Heart right ventricle (tissue), 16 donors: ENCODE measurements at regions of chr10 and their contacts with region 1.

Region 1: GRCh38 chr10:35635576-35635975 is 6.5 kb downstream of the FZD8 start:
- DNase-seq: peak in 1 of 2 donors; percentile 48
- ATAC-seq: peak; percentile 27 to 74 (median 65)
- H3K4me3 ChIP-seq: no peak overlapping the region
- H3K27ac ChIP-seq: no peak overlapping the region
- H3K4me1 ChIP-seq: peaks cover 3 to 41% (median 24%) of the 10 kb centered on the region in 9 donors
- H3K27me3 ChIP-seq: peaks cover 0 to 46% (median 0%) of the 10 kb centered on the region in 7 donors
- CTCF ChIP-seq: peak; percentile 85 to 98 (median 90)

Region 2: GRCh38 chr10:35545878-35546590 is 89.5 kb before region 1 on chr10:
- intact Hi-C with region 1: no loop called
- DNase-seq: no peak
- ATAC-seq: no peak
- H3K4me3 ChIP-seq: no peak overlapping the region
- H3K27ac ChIP-seq: peak overlapping the region in 1 of 10 donors; percentile 15
- H3K4me1 ChIP-seq: peaks cover 0 to 28% (median 3%) of the 10 kb centered on the region in 9 donors
- H3K27me3 ChIP-seq: no peaks in the 10 kb centered on the region
- CTCF ChIP-seq: no peak

Region 3: GRCh38 chr10:35585903-35586535 is 49.6 kb before region 1 on chr10:
- intact Hi-C with region 1: no loop called
- DNase-seq: no peak
- ATAC-seq: no peak
- H3K4me3 ChIP-seq: no peak overlapping the region
- H3K27ac ChIP-seq: no peak overlapping the region
- H3K4me1 ChIP-seq: no peaks in the 10 kb centered on the region
- H3K27me3 ChIP-seq: peaks cover 0 to 5% (median 0%) of the 10 kb centered on the region in 7 donors
- CTCF ChIP-seq: no peak

Region 4: DNA sequence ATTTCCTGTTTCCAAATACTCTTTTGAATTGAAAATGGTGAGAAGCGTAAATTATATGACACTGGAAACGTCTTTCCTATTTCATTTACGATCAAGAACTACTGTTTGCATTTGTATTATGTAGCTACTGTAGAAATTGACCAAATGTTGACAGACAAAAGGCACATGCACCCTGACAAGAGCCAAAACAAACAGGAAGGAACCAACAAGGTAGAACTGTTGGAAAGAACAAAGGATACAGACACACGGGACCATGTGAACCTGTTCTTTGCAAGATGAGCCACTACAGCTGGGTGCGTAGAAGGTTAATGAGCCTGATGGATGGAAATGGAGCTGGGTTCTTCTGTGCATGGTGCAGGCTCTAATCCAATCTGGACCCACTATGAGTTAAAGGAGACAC is 55.0 kb after region 1 on chr10:
- intact Hi-C with region 1: no loop called
- DNase-seq: no peak
- ATAC-seq: no peak
- H3K4me3 ChIP-seq: no peak overlapping the region
- H3K27ac ChIP-seq: no peak overlapping the region
- H3K4me1 ChIP-seq: no peaks in the 10 kb centered on the region
- H3K27me3 ChIP-seq: no peaks in the 10 kb centered on the region
- CTCF ChIP-seq: no peak

Region 5: DNA sequence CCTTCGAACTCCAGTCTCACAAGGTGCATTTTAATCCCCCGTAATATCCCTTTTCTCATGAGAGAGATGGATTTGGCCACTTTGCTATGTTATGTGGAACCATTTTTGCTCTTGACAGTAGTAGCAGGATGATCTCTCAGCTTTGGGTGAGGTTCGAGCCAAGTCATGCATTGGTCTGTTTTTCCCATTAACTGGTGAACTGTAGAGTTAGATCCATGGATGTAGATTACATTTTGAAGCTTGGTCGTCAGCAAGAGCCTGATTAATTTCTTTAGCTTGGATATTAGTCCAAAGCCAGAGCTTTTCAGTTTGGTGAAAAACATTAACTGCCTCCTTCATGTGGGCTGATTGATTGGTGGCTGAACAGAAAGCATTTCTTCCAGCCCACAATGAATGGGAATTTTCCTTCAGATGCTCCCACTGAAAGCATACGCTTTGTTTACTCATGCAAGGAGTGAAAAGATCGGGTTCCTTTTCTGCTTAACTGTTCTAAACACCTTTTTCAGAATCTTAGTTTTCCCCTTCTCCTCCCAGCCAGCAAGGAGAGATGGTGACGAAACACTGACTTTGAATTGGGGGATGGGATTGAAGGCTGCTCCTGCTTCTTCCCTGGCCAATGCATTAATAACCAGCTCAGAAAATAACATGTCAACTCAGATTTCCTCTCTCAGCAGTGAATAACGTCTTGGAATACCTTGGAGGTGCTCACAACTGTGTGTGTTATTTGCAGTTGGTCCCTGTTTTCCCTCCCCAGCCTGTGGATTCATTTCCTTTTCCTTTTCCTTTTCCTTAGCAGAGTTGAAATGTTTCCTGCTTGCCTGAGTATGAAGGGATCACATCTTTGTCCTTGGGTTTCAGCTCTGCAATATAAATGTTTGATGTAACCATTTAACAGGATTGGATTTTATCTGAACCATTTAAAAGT is 358.3 kb after region 1 on chr10:
- intact Hi-C with region 1: loop called in 5 of 10 experiments (anchors 5 to 10 kb)
- DNase-seq: no peak
- ATAC-seq: peak in 2 of 8 donors; percentile 52 to 72
- H3K4me3 ChIP-seq: no peak overlapping the region
- H3K27ac ChIP-seq: no peak overlapping the region
- H3K4me1 ChIP-seq: peaks cover 0 to 30% (median 9%) of the 10 kb centered on the region in 9 donors
- H3K27me3 ChIP-seq: no peaks in the 10 kb centered on the region
- CTCF ChIP-seq: no peak

Region 6: DNA sequence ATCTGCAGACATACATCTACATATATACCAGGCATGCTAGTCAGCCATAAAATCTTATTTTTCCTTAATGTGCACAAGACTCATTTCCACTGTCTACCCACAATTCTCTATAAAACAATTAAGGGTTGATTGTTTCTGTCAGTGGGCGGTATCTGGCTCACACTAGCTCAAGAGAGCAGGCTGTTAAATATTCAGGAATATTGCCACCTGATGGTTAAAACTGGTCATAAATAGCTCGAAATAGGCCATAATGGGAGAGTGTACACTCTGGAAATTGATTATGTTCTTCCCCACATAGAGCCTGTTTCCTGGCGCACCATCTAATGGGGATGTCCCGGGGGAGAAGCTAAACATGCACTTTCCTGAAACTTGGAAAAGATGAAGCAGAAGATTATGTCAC is 869.2 kb after region 1 on chr10:
- intact Hi-C with region 1: loop called in 5 of 10 experiments (anchors 5 to 10 kb)
- DNase-seq: no peak
- ATAC-seq: peak in 5 of 8 donors; percentile 15 to 64 (median 41)
- H3K4me3 ChIP-seq: no peak overlapping the region
- H3K27ac ChIP-seq: no peak overlapping the region
- H3K4me1 ChIP-seq: no peaks in the 10 kb centered on the region
- H3K27me3 ChIP-seq: no peaks in the 10 kb centered on the region
- CTCF ChIP-seq: peak in 6 of 9 donors; percentile 20 to 50 (median 34)

Region 7: DNA sequence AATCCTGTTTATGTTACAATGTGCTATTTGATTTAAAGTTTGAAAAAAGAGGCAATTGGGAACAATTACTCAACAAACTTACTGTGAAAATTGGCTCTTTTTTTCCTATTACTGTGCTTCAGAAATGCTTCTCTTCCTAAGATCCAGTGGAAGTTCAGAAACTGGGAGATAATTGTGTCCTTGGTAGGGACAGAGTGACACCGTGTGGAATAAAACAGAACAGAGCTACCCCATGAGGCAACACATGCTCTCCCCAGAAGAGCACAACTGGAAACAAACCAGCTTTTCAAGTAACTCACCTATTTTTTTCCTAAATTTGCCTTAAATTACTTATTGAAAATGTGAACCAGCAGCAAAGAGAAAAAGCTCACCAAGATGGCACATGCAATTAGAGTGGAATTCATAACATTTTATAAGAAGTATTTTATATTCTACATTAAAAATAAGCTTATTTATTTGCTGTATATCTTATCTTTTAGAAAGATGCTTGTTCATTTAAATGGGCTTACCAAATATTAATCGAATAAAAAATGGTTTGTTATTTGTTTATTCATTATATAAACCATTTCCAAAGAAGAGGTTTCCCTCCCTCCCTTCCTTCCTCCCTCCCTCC is 1143.8 kb after region 1 on chr10:
- intact Hi-C with region 1: loop called (anchors 1 to 5 kb)
- DNase-seq: peak in 1 of 2 donors; percentile 41
- ATAC-seq: peak; percentile 83 to 92 (median 90)
- H3K4me3 ChIP-seq: no peak overlapping the region
- H3K27ac ChIP-seq: no peak overlapping the region
- H3K4me1 ChIP-seq: peaks cover 0 to 6% (median 0%) of the 10 kb centered on the region in 9 donors
- H3K27me3 ChIP-seq: no peaks in the 10 kb centered on the region
- CTCF ChIP-seq: peak; percentile 55 to 88 (median 82)

Region 8: DNA sequence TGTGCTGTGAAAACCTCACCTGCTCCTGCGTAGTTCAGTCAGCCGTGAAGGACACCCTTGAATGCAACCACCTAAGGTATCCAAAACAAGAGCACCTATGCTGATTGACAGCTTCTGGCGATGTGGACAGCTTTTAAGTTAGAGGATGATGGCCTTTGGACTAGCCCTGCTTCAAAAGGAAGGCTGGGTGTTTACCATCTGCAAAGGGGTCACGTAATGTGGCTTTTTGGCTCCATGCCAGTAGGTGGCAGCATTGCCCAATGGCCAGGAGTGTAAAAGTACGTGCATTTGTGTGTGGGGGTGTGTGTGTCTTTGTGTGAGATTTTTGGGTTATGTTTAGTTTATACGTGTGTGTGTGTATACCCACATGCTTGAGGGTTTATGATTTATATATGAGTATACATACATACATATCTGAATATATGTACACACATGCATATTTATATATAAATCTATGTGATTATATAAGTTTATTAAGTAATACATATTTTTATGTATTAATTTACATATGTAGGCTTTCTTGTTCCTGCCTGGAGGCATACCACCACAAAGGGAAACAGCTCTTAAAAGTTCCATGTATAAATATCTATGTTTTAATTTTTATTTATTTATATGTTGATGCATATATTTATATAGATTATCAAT is 1253.5 kb after region 1 on chr10:
- intact Hi-C with region 1: loop called in 8 of 10 experiments (anchors 5 to 10 kb)
- DNase-seq: no peak
- ATAC-seq: no peak
- H3K4me3 ChIP-seq: no peak overlapping the region
- H3K27ac ChIP-seq: no peak overlapping the region
- H3K4me1 ChIP-seq: peaks cover 0 to 4% (median 0%) of the 10 kb centered on the region in 9 donors
- H3K27me3 ChIP-seq: no peaks in the 10 kb centered on the region
- CTCF ChIP-seq: peak in 1 of 9 donors; percentile 15